Activated CD8-positive, alpha-beta T cell treated with anti-CD3 and anti-CD28 coated beads for 36 hours (primary cell): ENCODE measurements at regions of chr3 and their contacts with region 1.

Region 1: GRCh38 chr3:167734498-167735232 is at the start of gene PDCD10:
- DNase-seq: peak; percentile 98
- ATAC-seq: peak; percentile 88
- H3K4me3 Mint-ChIP-seq: no peak within 1 kb of the TSS
- H3K27ac Mint-ChIP-seq: no peak within 1 kb of the TSS
- H3K4me1 Mint-ChIP-seq: peaks cover 43% of the 10 kb centered on the region
- H3K27me3 Mint-ChIP-seq: no peaks in the 10 kb centered on the region
- CTCF ChIP-seq: no peak
- total RNA-seq, gene PDCD10: 68.9 to 74.0 TPM

Region 2: DNA sequence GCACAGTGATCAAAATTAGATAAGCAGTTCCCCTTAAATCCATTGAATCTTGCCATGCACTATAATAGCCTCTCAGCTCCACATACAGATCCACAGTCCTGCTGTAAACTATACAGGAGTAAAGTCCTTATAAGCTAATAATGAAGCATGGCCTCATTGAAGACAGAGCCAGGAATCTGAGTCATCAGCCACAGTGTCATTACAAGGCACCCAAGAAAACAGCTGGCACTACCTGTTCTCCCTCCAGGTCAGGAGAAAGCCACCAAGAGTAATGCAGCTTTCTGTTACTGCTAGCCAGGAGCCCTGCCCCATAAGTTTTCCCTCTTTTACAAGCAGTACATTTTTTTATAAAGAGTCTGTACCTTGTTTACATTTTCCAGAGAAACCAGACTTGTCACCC is 108.2 kb before region 1 on chr3:
- CTCF ChIA-PET with region 1: no interaction called
- POLR2A ChIA-PET with region 1: no interaction called
- intact Hi-C with region 1: no loop called
- DNase-seq: no peak
- ATAC-seq: no peak
- H3K4me3 Mint-ChIP-seq: no peak overlapping the region
- H3K27ac Mint-ChIP-seq: no peak overlapping the region
- H3K4me1 Mint-ChIP-seq: no peaks in the 10 kb centered on the region
- H3K27me3 Mint-ChIP-seq: peaks cover 3% of the 10 kb centered on the region
- CTCF ChIP-seq: no peak

Region 3: GRCh38 chr3:167691366-167691765 is 43.3 kb before region 1 on chr3:
- CTCF ChIA-PET with region 1: interaction called, 5 read pairs
- POLR2A ChIA-PET with region 1: no interaction called
- intact Hi-C with region 1: loop called (anchors 5 kb)
- DNase-seq: peak; percentile 62
- ATAC-seq: peak; percentile 98
- H3K4me3 Mint-ChIP-seq: no peak overlapping the region
- H3K27ac Mint-ChIP-seq: peak overlapping the region; percentile 68
- H3K4me1 Mint-ChIP-seq: peaks cover 27% of the 10 kb centered on the region
- H3K27me3 Mint-ChIP-seq: no peaks in the 10 kb centered on the region
- CTCF ChIP-seq: no peak

Region 4: DNA sequence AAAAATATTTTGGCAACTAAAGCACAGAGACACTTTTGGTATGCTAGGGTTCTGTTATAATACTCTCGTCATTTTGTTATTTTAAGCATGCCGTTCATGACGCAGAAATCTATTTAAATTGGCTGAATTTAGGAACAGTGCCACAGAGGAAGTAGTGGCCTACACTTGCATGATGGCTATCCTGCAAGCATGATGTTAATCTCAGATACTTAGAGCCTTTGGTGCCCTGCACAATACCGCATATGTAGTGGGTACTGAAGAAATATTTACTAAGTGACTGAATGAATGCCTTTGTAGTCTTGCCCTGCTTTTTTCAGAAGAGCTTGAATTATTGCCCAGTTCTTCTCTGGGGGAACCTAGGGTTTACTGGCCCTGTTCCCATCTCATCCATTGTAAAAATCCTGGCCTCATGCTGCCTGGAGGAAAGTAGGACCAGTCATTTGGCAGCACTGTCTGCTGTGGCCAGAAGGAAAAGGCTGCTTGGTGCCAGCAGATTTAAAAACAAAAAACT is 79.8 kb after region 1 on chr3:
- CTCF ChIA-PET with region 1: no interaction called
- POLR2A ChIA-PET with region 1: no interaction called
- intact Hi-C with region 1: no loop called
- DNase-seq: no peak
- ATAC-seq: no peak
- H3K4me3 Mint-ChIP-seq: no peak overlapping the region
- H3K27ac Mint-ChIP-seq: no peak overlapping the region
- H3K4me1 Mint-ChIP-seq: no peaks in the 10 kb centered on the region
- H3K27me3 Mint-ChIP-seq: no peaks in the 10 kb centered on the region
- CTCF ChIP-seq: no peak

Region 5: GRCh38 chr3:167852216-167852615 is 117.6 kb after region 1 on chr3:
- CTCF ChIA-PET with region 1: no interaction called
- POLR2A ChIA-PET with region 1: no interaction called
- intact Hi-C with region 1: no loop called
- DNase-seq: no peak
- ATAC-seq: no peak
- H3K4me3 Mint-ChIP-seq: no peak overlapping the region
- H3K27ac Mint-ChIP-seq: no peak overlapping the region
- H3K4me1 Mint-ChIP-seq: no peaks in the 10 kb centered on the region
- H3K27me3 Mint-ChIP-seq: no peaks in the 10 kb centered on the region
- CTCF ChIP-seq: no peak